Right ventricle myocardium superior (tissue), 1 donor: ENCODE measurements at regions of chr7 and their contacts with region 1.

Region 1: DNA sequence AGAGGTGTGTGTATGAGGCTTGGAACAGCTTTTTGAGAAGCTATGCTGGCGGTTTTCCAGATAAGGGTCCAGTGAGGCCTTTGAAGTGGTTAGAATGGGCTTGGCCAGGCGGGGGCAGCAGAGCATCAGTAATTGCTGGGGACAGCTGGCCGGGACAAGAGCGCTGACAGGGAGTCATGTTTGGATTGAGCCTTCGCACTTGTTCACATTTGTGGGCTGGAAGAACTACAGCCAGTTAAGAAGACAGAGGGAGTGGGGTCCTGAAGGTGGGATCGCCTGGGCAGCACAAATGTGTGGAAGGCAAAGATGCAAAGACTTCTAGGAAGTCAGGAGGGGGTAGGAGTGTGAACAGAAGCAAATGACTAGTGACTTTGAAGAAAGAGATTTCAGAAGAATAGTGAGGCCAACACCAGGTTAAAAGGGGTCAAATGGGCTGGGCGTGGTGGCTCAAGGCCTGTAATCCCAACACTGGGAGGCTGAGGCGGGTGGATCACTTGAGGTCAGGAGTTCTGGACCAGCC is 12.7 kb upstream of the SDHAF3 start:
- DNase-seq: peak; percentile 91
- ATAC-seq: peak; percentile 97

Region 2: DNA sequence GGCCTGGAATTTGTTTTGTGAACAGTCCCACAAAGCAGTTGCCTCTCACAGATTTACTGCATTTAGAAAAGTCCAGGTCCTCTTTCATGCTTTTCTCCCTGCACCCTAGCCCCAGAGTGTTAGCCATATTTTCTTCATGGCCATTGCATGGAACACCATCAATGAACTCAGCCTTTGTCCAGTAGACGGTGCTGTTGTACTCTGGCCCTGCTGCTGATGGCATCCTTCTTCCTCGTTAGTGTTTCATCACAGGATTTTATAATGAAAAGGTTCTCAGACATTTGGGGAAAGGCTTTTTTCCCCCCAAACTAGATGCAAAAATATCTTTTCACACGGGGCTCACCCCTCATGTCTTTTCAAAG is 689.9 kb before region 1 on chr7:
- intact Hi-C with region 1: no loop called
- DNase-seq: no peak
- ATAC-seq: peak; percentile 68

Region 3: GRCh38 chr7:97179454-97180104 is 74.8 kb after region 1 on chr7:
- intact Hi-C with region 1: loop called (anchors 2 kb)
- DNase-seq: no peak
- ATAC-seq: peak; percentile 74

Region 4: GRCh38 chr7:97835296-97836138 is 730.7 kb after region 1 on chr7:
- intact Hi-C with region 1: loop called (anchors 5 kb)
- DNase-seq: peak; percentile 64
- ATAC-seq: peak; percentile 71